ENCODE measurements at regions of chr9 and their contacts with region 1.

Region 1: DNA sequence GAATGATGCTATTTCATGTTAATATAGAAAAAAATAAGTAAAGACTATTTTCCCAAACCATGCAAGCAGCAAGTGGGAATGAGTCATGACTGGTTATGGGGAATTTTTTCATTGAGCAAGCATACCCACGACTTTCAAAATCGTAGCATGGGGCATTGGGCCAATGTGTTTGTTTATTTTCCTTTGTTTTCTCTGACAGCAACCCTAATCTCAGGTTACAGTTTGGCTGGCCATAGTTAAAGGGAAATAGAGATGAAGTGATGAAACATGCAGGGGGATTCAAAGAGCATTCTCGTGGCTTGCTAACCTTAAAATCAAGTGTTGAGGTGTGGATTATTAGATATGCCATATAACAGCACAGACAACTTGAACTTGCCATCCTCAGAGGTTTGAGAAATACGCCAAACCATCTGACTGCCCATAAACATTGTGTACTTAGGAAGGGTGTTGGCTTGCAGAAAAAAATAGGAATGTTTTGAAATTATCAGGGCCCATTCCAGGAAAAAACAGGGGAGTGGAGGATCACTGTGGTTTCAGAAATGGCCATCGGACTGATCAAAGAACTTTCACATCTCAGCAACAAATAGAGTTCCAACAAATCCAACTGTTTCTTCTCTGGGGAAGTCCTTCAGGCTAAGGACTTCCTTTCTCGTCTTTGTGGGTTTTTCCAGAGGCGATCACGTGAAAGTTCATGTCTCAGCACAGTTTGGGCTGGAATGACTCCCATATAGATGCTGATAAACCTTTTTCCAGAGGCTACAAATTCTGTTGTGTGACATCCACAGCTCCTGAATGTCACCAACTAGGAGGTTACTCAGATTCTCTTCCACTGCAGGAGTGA is 259.1 kb downstream of the SYK start:
- DNase-seq: peak; percentile 94
- ATAC-seq: peak; percentile 91
- H3K4me3 ChIP-seq: peak overlapping the region in 1 of 3 experiments; percentile 25; a peak in 1 of 6 replicates
- H3K27ac ChIP-seq: peak overlapping the region; percentile 87
- H3K4me1 ChIP-seq: peaks cover 51% of the 10 kb centered on the region
- H3K27me3 ChIP-seq: no peaks in the 10 kb centered on the region
- CTCF ChIP-seq: no peak
- EP300 ChIP-seq: peak; percentile 85 to 89
- POLR2A ChIP-seq: no peak
- RAD21 ChIP-seq: no peak

Region 2: DNA sequence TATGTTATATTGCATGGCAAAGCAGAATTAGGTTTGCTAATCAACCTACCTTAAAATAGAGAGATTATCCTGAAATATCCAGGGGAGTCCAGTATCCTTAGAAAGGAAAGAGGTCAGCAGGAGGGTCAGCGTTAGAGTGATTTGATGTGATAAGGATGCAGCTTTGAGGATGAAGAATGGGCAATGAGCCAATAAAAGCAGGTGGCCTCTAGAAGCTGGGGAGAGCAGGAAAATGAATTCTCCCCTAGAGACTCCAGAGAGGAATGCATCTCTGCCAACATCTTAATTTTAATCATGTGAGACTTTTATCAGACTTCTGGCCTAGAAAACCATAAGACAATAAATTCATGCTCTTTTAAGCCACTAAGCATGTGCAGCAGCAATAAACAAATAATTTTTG is 324.8 kb before region 1 on chr9:
- CTCF ChIA-PET with region 1: no interaction called
- POLR2A ChIA-PET with region 1: no interaction called
- in situ Hi-C with region 1: no loop called
- intact Hi-C with region 1: no loop called
- DNase-seq: no peak
- ATAC-seq: no peak
- H3K4me3 ChIP-seq: no peak overlapping the region
- H3K27ac ChIP-seq: no peak overlapping the region
- H3K4me1 ChIP-seq: no peaks in the 10 kb centered on the region
- H3K27me3 ChIP-seq: 0 out of 5 replicates have a peak, but pooled peaks cover 0 to under 1% of the 10 kb centered on the region in 2 experiments
- CTCF ChIP-seq: no peak
- EP300 ChIP-seq: no peak
- POLR2A ChIP-seq: no peak
- RAD21 ChIP-seq: no peak

Region 3: DNA sequence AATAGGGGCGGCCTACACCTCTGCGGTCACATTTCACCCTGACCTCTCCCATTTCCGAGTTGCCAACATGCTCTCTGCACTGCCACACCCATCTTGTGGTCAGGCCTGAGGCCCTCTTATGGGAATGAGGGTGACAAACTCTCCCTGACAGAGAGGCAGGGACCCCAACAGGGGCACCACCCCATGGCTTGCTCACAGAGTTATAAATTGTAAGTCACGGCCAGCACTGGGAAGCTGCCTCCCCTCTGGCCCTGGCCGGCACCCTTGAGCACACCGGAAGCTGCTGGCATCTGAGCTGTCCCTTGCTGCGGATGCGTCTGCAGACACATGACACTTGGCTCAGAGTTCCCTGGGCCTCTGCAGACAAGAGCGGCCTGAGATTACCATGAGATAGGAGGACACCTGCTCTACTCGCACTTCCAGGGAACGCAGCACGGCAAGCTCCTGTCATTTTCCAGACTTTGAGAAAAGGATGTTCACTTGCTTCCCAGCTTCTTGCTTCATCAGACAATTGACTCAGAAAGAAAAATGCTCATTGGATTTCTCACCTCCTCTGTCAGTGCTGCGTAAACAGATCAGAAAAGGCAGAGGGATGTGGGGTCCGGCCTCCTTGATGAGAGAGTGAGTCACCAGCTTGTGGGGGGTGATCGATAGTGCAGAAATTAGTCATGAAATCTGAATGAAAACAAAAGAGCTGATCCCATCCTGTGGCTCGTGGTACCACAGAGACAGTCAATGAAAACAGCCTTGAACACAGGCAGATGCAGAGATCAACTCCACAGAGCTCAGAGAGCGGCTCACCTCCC is 10.7 kb after region 1 on chr9:
- CTCF ChIA-PET with region 1: no interaction called
- POLR2A ChIA-PET with region 1: interaction called, 54 read pairs
- in situ Hi-C with region 1: no loop called
- intact Hi-C with region 1: loop called (anchors 1 kb)
- DNase-seq: peak; percentile 76
- ATAC-seq: peak; percentile 88
- H3K4me3 ChIP-seq: peak overlapping the region; percentile 33 to 66 (median 50)
- H3K27ac ChIP-seq: peak overlapping the region; percentile 71
- H3K4me1 ChIP-seq: peaks cover 62% of the 10 kb centered on the region
- H3K27me3 ChIP-seq: no peaks in the 10 kb centered on the region
- CTCF ChIP-seq: no peak; the same call in 1 of the 2 replicates
- EP300 ChIP-seq: peak in 1 of 2 experiments; percentile 50; a peak in 2 of 4 replicates
- POLR2A ChIP-seq: peak; percentile 18 to 61; a peak in 3 of 4 replicates
- RAD21 ChIP-seq: no peak

Region 4: DNA sequence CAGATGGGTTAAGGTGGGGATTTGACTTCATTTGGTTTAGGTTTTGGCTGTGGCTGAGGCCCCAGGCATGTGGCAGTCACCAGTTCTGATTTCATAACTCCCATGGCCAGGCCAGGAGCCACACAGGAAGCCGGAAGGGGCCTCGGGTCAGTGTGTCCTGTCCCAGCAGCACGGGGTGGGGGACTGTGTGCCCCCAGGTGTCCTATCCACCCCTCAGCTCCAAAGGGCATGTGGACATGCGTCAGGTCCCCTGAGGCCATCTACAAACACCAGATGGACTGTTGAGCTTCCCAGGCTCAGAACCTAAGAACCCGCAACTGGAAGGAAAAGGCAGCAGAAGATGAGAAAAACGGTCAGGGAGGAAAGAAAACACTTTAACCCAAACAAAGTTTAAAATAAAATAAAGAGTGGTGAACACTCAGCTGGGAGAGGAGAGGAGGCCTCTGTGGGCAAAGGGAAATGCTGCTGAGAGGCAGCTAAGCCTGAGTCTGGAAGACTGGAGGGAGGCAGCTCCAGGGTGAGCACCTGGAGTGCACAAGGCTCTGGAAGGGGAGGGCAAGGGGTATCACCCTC is 40.2 kb after region 1 on chr9:
- CTCF ChIA-PET with region 1: no interaction called
- POLR2A ChIA-PET with region 1: no interaction called
- in situ Hi-C with region 1: no loop called
- intact Hi-C with region 1: loop called (anchors 1 kb)
- DNase-seq: peak; percentile 65
- ATAC-seq: peak; percentile 98
- H3K4me3 ChIP-seq: no peak overlapping the region; a peak in 1 of 6 replicates
- H3K27ac ChIP-seq: peak overlapping the region; percentile 92
- H3K4me1 ChIP-seq: peaks cover 37% of the 10 kb centered on the region
- H3K27me3 ChIP-seq: no peaks in the 10 kb centered on the region
- CTCF ChIP-seq: peak; percentile 38
- EP300 ChIP-seq: peak; percentile 44 to 89; a peak in 2 of 4 replicates
- POLR2A ChIP-seq: no peak
- RAD21 ChIP-seq: no peak